ENCODE measurements at regions of chr14 and their contacts with region 1.

Region 1: DNA sequence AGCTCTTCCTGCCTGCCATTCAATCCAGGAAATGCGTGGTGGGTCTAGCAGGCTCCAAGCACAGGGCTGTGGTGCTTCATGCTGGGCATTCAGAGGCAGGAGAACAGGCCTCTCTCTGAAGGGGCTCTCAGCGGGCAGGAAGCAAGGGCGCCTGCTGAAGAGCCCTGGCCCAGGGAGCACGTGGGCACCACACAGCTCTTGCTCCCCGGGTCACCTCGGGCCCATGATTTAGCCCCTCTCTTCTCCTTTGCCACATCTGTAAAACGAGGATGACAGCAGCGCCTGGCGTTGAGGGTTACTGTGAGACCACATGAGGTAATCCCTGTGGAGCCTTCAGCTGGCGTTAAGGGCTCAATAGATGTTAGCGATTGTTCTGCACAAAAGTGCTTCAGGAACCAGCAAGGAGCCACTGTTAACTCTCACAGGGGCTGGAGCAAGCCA is 37.6 kb upstream of the SPTLC2 start:
- DNase-seq: no peak
- H3K4me3 ChIP-seq: no peak overlapping the region
- H3K27ac ChIP-seq: no peak overlapping the region
- H3K4me1 ChIP-seq: peaks cover 7% of the 10 kb centered on the region
- H3K27me3 ChIP-seq: no peaks in the 10 kb centered on the region
- CTCF ChIP-seq: no peak
- POLR2A ChIP-seq: no peak

Region 2: DNA sequence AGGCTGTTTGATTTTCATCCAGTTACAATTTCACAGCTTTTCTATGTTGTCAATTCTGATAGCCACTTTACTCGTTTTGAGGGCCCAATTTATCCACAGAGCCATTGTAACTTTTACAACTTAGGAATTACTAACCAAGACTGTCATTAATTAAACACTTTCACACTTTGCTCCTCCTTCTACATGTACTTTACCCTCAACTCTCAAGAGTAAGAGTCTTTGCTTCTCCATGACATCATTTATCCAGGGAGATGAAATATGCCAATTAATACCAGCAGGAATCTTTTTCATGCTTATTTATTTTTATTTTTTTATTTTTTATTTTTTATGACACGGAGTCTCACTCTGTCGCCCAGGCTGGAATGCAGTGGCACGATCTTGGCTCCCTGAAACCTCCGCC is 67.4 kb after region 1 on chr14:
- CTCF ChIA-PET with region 1: no interaction called
- POLR2A ChIA-PET with region 1: no interaction called
- dilution Hi-C with region 1: no loop called
- intact Hi-C with region 1: no loop called
- DNase-seq: no peak
- H3K4me3 ChIP-seq: no peak overlapping the region
- H3K27ac ChIP-seq: no peak overlapping the region
- H3K4me1 ChIP-seq: no peaks in the 10 kb centered on the region
- H3K27me3 ChIP-seq: no peaks in the 10 kb centered on the region
- CTCF ChIP-seq: no peak
- POLR2A ChIP-seq: no peak

Region 3: GRCh38 chr14:78448164-78449094 is 794.4 kb after region 1 on chr14:
- CTCF ChIA-PET with region 1: no interaction called
- POLR2A ChIA-PET with region 1: no interaction called
- dilution Hi-C with region 1: no loop called
- intact Hi-C with region 1: loop called (anchors 10 kb)
- DNase-seq: peak; percentile 47
- H3K4me3 ChIP-seq: no peak overlapping the region
- H3K27ac ChIP-seq: no peak overlapping the region
- H3K4me1 ChIP-seq: no peaks in the 10 kb centered on the region
- H3K27me3 ChIP-seq: no peaks in the 10 kb centered on the region
- CTCF ChIP-seq: peak; percentile 63 to 66
- POLR2A ChIP-seq: no peak